ENCODE measurements at regions of chr5 and their contacts with region 1.

Region 1: DNA sequence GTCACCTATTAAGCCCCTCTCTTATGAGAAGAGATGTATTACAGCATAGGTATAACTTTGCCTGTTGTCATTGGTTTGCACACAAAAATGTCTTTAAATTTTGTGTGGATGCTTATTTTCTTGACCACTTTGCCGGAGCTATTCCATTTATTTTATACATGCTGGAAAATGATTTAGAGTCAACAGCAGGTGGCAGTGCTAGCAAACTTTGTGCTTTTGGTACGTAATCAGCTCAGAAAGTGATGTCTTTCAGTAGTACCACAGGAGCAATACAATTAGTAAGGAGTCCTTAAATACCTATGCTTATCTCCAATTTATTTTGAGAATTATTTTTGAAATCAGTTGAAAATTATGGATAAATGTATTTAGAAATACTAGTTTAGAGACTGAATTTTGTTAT is 19.8 kb upstream of the NUDT12 start:
- DNase-seq: no peak
- H3K4me3 ChIP-seq: no peak overlapping the region
- H3K27ac ChIP-seq: no peak overlapping the region
- H3K4me1 ChIP-seq: no peaks in the 10 kb centered on the region
- H3K27me3 ChIP-seq: peaks cover 0 to 3% (median 0%) of the 10 kb centered on the region in 4 donors
- CTCF ChIP-seq: peak in 3 of 6 experiments; percentile 28 to 53 (median 40)
- POLR2A ChIP-seq: no peak

Region 2: GRCh38 chr5:103758996-103759395 is 176.6 kb after region 1 on chr5:
- intact Hi-C with region 1: no loop called
- DNase-seq: no peak
- H3K4me3 ChIP-seq: no peak overlapping the region
- H3K27ac ChIP-seq: no peak overlapping the region
- H3K4me1 ChIP-seq: no peaks in the 10 kb centered on the region
- H3K27me3 ChIP-seq: no peaks in the 10 kb centered on the region
- CTCF ChIP-seq: no peak
- POLR2A ChIP-seq: no peak

Region 3: GRCh38 chr5:104184264-104184663 is 601.9 kb after region 1 on chr5:
- intact Hi-C with region 1: loop called (anchors 5 kb)
- DNase-seq: no peak
- H3K4me3 ChIP-seq: no peak overlapping the region
- H3K27ac ChIP-seq: no peak overlapping the region
- H3K4me1 ChIP-seq: no peaks in the 10 kb centered on the region
- H3K27me3 ChIP-seq: no peaks in the 10 kb centered on the region
- CTCF ChIP-seq: no peak
- POLR2A ChIP-seq: no peak

Measured in esophagus squamous epithelium (tissue), 5 donors.